HCT116 (cell line): ENCODE measurements at regions of chr1 and their contacts with region 1.

Region 1: GRCh38 chr1:150561974-150562445 is 12.8 kb downstream of the ADAMTSL4 start:
- DNase-seq: peak; percentile 73
- ATAC-seq: peak; percentile 66
- H3K4me3 ChIP-seq: peak overlapping the region; percentile 51 to 68
- H3K27ac ChIP-seq: peak overlapping the region; percentile 95
- H3K4me1 ChIP-seq: peaks cover 42 to 58% of the 10 kb centered on the region in 2 experiments
- H3K27me3 ChIP-seq: no peaks in the 10 kb centered on the region
- CTCF ChIP-seq: no peak
- POLR2A ChIP-seq: peak; percentile 2
- RAD21 ChIP-seq: no peak

Region 2: GRCh38 chr1:150089846-150090520 is 472.0 kb before region 1 on chr1:
- CTCF ChIA-PET with region 1: no interaction called
- POLR2A ChIA-PET with region 1: no interaction called
- RAD21 ChIA-PET with region 1: no interaction called
- intact Hi-C with region 1: no loop called
- DNase-seq: no peak
- ATAC-seq: no peak
- H3K4me3 ChIP-seq: no peak overlapping the region
- H3K27ac ChIP-seq: no peak overlapping the region
- H3K4me1 ChIP-seq: no peaks in the 10 kb centered on the region
- H3K27me3 ChIP-seq: no peaks in the 10 kb centered on the region
- CTCF ChIP-seq: no peak
- POLR2A ChIP-seq: no peak
- RAD21 ChIP-seq: no peak

Region 3: DNA sequence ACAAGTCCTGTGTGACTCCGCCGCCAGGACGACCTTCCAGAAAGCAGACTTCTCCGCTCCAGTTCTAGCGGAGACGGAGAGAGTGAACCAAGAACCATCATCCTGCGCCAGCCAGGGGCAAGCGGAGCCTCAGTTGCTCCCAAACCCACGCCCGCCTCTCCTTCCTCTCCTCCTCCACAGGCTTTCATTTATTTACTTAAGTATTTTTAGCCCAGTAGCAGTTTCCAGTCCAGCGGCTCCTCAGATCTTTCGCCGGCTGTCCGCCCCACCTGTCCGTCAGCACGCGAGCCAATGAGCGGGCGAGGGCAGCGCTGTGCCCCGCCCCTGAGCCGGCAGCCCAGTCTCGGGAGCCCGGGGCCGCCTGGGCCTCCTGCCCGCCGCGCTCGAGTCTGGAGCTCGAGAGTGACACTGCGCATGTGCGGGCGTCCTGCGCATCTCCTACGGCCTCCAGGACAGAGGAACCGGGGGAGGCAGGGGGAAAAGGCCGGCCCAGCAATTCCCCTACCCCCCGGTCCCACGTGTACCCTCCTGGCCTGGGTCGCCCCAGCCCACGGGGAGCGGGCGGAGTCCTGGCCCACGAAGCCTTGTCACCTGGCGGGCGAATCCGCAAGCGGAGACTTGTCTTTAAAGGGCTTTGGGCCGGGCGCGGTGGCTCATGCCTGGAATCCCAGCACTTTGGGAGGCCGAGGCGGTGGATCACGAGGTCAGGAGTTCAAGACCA is 46.5 kb before region 1 on chr1 and contains the start of gene FALEC:
- CTCF ChIA-PET with region 1: interaction called, 13 read pairs
- POLR2A ChIA-PET with region 1: no interaction called
- RAD21 ChIA-PET with region 1: no interaction called
- intact Hi-C with region 1: no loop called
- DNase-seq: peak; percentile 87
- ATAC-seq: peak; percentile 98
- H3K4me3 ChIP-seq: peak within 1 kb of the TSS; percentile 63 to 67
- H3K27ac ChIP-seq: peak within 1 kb of the TSS; percentile 56
- H3K4me1 ChIP-seq: peaks cover 10 to 23% of the 10 kb centered on the region in 2 experiments
- H3K27me3 ChIP-seq: no peaks in the 10 kb centered on the region
- CTCF ChIP-seq: no peak
- POLR2A ChIP-seq: peak; percentile 45
- RAD21 ChIP-seq: no peak
- total RNA-seq, gene FALEC: 0.59 TPM

Region 4: GRCh38 chr1:150578965-150579798 is 17.2 kb after region 1 on chr1 and contains the start of gene MCL1:
- CTCF ChIA-PET with region 1: interaction called, 3 read pairs
- POLR2A ChIA-PET with region 1: interaction called, 41 read pairs
- RAD21 ChIA-PET with region 1: no interaction called
- intact Hi-C with region 1: no loop called
- DNase-seq: peak; percentile 85
- ATAC-seq: peak; percentile 91
- H3K4me3 ChIP-seq: peak within 1 kb of the TSS; percentile 71 to 80
- H3K27ac ChIP-seq: peak within 1 kb of the TSS; percentile 92
- H3K4me1 ChIP-seq: peaks cover 26 to 51% of the 10 kb centered on the region in 2 experiments
- H3K27me3 ChIP-seq: no peaks in the 10 kb centered on the region
- CTCF ChIP-seq: no peak
- POLR2A ChIP-seq: peak; percentile 98
- RAD21 ChIP-seq: no peak
- total RNA-seq, gene MCL1: 146 TPM

Region 5: DNA sequence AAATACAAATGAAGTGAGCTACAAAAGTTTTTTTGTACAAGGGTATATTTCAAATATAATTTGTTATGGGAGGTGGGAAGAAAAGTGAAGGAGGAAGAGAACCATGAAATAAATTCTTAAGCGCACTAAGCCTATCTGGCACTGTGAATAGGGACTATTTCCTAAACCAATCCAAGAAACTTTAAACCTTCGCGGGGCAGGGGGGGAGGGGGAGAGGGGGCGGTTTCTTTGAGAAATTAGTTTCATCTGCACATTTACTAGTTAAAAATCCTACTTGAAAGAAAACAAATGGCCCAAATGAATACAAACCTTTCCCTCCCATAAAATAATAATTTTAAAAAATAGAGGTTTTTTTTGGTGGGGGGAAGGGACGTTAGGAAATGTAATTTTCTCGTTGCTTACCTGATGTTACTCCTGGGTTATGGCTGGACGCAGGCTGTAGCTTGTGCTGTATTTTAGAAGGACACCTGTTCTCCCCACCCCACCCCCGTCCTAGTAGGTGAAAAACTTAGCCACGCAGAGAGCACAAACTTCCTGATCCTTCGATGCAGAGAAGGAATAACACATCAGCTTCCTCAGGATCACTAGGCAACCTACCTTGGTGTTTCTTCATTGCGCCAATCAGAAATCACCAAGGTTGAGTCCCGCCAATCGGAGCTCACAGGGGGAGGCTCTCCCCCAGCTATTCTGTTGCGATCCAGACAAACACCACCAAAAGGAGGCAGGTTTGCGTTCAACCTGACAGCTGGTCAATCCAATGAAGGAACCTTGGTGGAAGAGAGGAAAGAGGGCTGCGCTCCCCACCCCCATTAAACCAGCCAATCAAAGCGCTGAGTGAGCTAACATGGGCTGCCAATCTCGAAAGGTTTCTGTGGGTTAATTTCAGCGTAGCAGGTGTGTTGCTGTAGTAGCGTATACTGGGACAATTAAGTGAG is 134.8 kb after region 1 on chr1 and contains the start of gene GOLPH3L:
- CTCF ChIA-PET with region 1: interaction called, 3 read pairs
- POLR2A ChIA-PET with region 1: interaction called, 3 read pairs
- RAD21 ChIA-PET with region 1: no interaction called
- intact Hi-C with region 1: loop called (anchors 10 kb)
- DNase-seq: peak; percentile 99
- ATAC-seq: peak; percentile 99
- H3K4me3 ChIP-seq: peak within 1 kb of the TSS; percentile 71 to 88
- H3K27ac ChIP-seq: peak within 1 kb of the TSS; percentile 42
- H3K4me1 ChIP-seq: peaks cover 5 to 11% of the 10 kb centered on the region in 2 experiments; a peak in 3 of 4 replicates
- H3K27me3 ChIP-seq: no peaks in the 10 kb centered on the region
- CTCF ChIP-seq: no peak
- POLR2A ChIP-seq: peak; percentile 17
- RAD21 ChIP-seq: no peak
- total RNA-seq, gene GOLPH3L: 28.0 TPM

Region 6: DNA sequence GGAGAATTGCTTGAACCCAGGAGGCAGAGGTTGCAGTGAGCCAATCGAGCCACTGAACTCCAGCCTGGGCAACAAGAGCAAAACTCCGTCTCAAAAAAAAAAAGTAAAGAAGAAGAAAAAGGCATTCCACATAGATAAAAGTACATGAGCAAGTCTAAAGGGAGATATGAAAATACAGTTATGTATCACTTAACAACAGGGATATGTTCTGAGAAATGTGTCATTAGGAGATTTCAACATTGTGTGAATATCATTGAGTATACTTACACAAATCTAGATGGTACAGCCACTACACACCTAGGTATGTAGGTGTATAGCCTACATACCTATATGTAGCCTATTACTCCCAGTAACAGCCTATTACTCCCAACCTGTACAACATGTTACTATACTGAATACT is 301.7 kb after region 1 on chr1:
- CTCF ChIA-PET with region 1: no interaction called
- POLR2A ChIA-PET with region 1: no interaction called
- RAD21 ChIA-PET with region 1: no interaction called
- intact Hi-C with region 1: no loop called
- DNase-seq: no peak
- ATAC-seq: no peak
- H3K4me3 ChIP-seq: no peak overlapping the region
- H3K27ac ChIP-seq: no peak overlapping the region
- H3K4me1 ChIP-seq: no peaks in the 10 kb centered on the region
- H3K27me3 ChIP-seq: no peaks in the 10 kb centered on the region
- CTCF ChIP-seq: no peak
- POLR2A ChIP-seq: no peak
- RAD21 ChIP-seq: no peak

Region 7: DNA sequence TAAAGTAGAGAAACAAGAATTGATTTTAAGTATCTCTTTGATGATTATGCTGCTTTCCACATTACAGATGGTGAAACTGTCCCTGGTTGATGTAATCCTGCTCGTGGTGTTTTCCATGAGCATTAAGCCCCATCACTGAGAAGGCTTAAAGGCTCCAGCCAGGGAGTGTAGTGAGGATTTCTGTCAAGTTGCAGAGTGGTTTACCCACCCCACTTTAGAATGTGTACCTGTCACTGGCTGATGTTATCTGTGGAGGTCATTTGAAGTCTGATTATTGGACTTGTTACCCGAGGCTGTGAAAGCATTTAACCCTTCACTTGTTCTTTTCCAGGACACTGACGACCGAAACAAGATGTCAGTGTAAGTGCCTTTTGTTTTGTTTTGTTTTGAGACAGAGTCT is 399.8 kb after region 1 on chr1:
- CTCF ChIA-PET with region 1: no interaction called
- POLR2A ChIA-PET with region 1: no interaction called
- RAD21 ChIA-PET with region 1: no interaction called
- intact Hi-C with region 1: no loop called
- DNase-seq: no peak
- ATAC-seq: no peak
- H3K4me3 ChIP-seq: no peak overlapping the region
- H3K27ac ChIP-seq: no peak overlapping the region
- H3K4me1 ChIP-seq: no peaks in the 10 kb centered on the region
- H3K27me3 ChIP-seq: no peaks in the 10 kb centered on the region
- CTCF ChIP-seq: no peak
- POLR2A ChIP-seq: no peak
- RAD21 ChIP-seq: no peak

Region 8: GRCh38 chr1:150979092-150980056 is 417.4 kb after region 1 on chr1:
- CTCF ChIA-PET with region 1: interaction called, 14 read pairs
- POLR2A ChIA-PET with region 1: interaction called, 4 read pairs
- RAD21 ChIA-PET with region 1: no interaction called
- intact Hi-C with region 1: loop called (anchors 5 kb)
- DNase-seq: peak; percentile 78
- ATAC-seq: peak; percentile 42
- H3K4me3 ChIP-seq: no peak overlapping the region
- H3K27ac ChIP-seq: peak overlapping the region; percentile 92
- H3K4me1 ChIP-seq: peaks cover 71 to 83% of the 10 kb centered on the region in 2 experiments
- H3K27me3 ChIP-seq: no peaks in the 10 kb centered on the region
- CTCF ChIP-seq: peak in 2 of 3 experiments; percentile 100; a peak in 4 of 6 replicates
- POLR2A ChIP-seq: no peak
- RAD21 ChIP-seq: no peak